ENCODE measurements at regions of chr15 and their contacts with region 1.

Region 1: DNA sequence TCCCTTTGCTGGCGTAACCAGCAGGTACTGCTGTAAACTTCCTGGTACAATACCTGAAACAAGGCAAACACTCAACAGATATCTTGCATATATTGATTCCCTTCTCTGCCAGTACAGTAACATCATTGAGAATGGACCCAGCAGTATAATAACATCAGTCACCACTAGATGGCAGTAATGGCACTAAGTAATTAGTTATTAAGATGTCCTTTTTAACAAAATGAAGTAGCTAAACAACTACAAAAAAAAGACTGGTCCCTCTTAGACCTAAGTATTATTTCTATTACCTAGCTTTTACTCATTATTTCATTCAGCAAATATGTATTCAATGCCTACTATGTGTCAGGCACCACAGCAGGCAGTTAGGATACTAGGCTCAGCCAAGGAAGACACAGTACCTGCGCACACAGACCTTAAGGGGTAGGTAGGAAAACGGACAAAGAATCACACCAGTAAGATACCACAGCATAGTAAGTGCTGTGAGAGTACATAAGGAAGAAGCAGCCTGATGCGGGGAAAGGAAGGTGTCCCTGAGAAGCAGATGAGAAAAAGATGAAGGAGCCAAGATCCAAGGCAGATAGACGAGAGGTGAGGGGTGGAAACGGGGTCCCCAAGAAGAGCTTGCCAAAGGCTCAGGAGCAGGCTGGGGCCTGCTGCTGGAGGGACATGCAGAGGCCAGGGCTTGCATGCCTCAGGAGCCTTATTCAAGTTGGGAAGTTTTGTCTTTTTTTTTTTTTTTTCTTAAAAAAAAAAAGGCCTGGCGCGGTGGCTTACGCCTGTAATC is 102.8 kb upstream of the CHD2 start:
- DNase-seq: peak; percentile 80 to 89 (median 81)
- H3K4me3 ChIP-seq: no peak overlapping the region
- H3K27ac ChIP-seq: no peak overlapping the region
- H3K4me1 ChIP-seq: peaks cover 0 to 10% (median 4%) of the 10 kb centered on the region in 4 experiments
- H3K27me3 ChIP-seq: no peaks in the 10 kb centered on the region

Region 2: GRCh38 chr15:92903941-92904831 is 106.8 kb after region 1 on chr15:
- CTCF ChIA-PET with region 1: interaction called, 19 read pairs
- POLR2A ChIA-PET with region 1: interaction called, 3 read pairs
- DNase-seq: peak; percentile 98 to 99 (median 99)
- H3K4me3 ChIP-seq: peak overlapping the region; percentile 30 to 100 (median 92)
- H3K27ac ChIP-seq: peak overlapping the region; percentile 99 to 100
- H3K4me1 ChIP-seq: peaks cover 46 to 65% (median 55%) of the 10 kb centered on the region in 4 experiments
- H3K27me3 ChIP-seq: no peaks in the 10 kb centered on the region

Region 3: GRCh38 chr15:92917606-92918407 is 120.4 kb after region 1 on chr15:
- CTCF ChIA-PET with region 1: interaction called, 102 read pairs
- POLR2A ChIA-PET with region 1: interaction called, 5 read pairs
- DNase-seq: peak; percentile 94 to 96 (median 94)
- H3K4me3 ChIP-seq: peak overlapping the region in 2 of 7 experiments; percentile 25 to 34
- H3K27ac ChIP-seq: peak overlapping the region in 1 of 2 experiments; percentile 52
- H3K4me1 ChIP-seq: peaks cover 26 to 64% (median 44%) of the 10 kb centered on the region in 4 experiments
- H3K27me3 ChIP-seq: no peaks in the 10 kb centered on the region

Region 4: GRCh38 chr15:92928225-92928750 is 130.9 kb after region 1 on chr15:
- CTCF ChIA-PET with region 1: interaction called, 11 read pairs
- POLR2A ChIA-PET with region 1: no interaction called
- DNase-seq: no peak
- H3K4me3 ChIP-seq: no peak overlapping the region
- H3K27ac ChIP-seq: no peak overlapping the region
- H3K4me1 ChIP-seq: peaks cover 0 to 2% (median 0%) of the 10 kb centered on the region in 4 experiments
- H3K27me3 ChIP-seq: no peaks in the 10 kb centered on the region

Measured in common myeloid progenitor, CD34-positive (primary cell).